Activated naive CD4-positive, alpha-beta T cell treated with anti-CD3 and anti-CD28 coated beads for 36 hours (primary cell): ENCODE measurements at regions of chr7 and their contacts with region 1.

Region 1: GRCh38 chr7:131231381-131232220 is 96.1 kb upstream of the MKLN1 start:
- DNase-seq: peak; percentile 80
- H3K4me3 Mint-ChIP-seq: peak overlapping the region; percentile 57
- H3K27ac Mint-ChIP-seq: peak overlapping the region; percentile 86
- H3K4me1 Mint-ChIP-seq: peaks cover 45% of the 10 kb centered on the region
- H3K27me3 Mint-ChIP-seq: no peaks in the 10 kb centered on the region

Region 2: GRCh38 chr7:130421684-130422083 is 809.9 kb before region 1 on chr7:
- CTCF ChIA-PET with region 1: no interaction called
- intact Hi-C with region 1: loop called (anchors 10 kb)
- DNase-seq: peak; percentile 65
- H3K4me3 Mint-ChIP-seq: peak overlapping the region; percentile 23
- H3K27ac Mint-ChIP-seq: peak overlapping the region; percentile 78
- H3K4me1 Mint-ChIP-seq: peaks cover 74% of the 10 kb centered on the region
- H3K27me3 Mint-ChIP-seq: no peaks in the 10 kb centered on the region

Region 3: GRCh38 chr7:130649004-130649790 is 582.4 kb before region 1 on chr7:
- CTCF ChIA-PET with region 1: no interaction called
- intact Hi-C with region 1: loop called (anchors 1 kb)
- DNase-seq: peak; percentile 53
- H3K4me3 Mint-ChIP-seq: no peak overlapping the region
- H3K27ac Mint-ChIP-seq: peak overlapping the region; percentile 79
- H3K4me1 Mint-ChIP-seq: peaks cover 29% of the 10 kb centered on the region
- H3K27me3 Mint-ChIP-seq: no peaks in the 10 kb centered on the region

Region 4: DNA sequence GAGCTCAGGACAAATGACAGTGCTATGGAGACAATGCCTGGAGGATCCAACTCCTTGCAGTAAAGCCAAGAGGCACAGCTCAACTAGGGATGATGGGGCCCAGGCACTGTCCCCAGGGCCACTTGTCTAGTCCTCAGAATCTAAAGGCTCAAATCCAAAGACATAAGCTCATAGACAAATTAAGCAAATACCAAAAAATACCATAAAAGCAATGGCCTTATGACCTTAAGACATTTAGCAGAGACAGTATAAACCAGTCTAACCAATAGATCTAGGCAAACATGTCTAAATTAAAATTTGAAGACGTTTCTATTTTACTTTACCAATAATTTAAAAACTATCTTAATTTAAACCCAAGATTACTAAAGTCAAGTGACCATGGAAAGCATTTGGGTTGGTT is 81.2 kb after region 1 on chr7:
- CTCF ChIA-PET with region 1: no interaction called
- intact Hi-C with region 1: no loop called
- DNase-seq: no peak
- H3K4me3 Mint-ChIP-seq: no peak overlapping the region
- H3K27ac Mint-ChIP-seq: no peak overlapping the region
- H3K4me1 Mint-ChIP-seq: no peaks in the 10 kb centered on the region
- H3K27me3 Mint-ChIP-seq: no peaks in the 10 kb centered on the region

Region 5: DNA sequence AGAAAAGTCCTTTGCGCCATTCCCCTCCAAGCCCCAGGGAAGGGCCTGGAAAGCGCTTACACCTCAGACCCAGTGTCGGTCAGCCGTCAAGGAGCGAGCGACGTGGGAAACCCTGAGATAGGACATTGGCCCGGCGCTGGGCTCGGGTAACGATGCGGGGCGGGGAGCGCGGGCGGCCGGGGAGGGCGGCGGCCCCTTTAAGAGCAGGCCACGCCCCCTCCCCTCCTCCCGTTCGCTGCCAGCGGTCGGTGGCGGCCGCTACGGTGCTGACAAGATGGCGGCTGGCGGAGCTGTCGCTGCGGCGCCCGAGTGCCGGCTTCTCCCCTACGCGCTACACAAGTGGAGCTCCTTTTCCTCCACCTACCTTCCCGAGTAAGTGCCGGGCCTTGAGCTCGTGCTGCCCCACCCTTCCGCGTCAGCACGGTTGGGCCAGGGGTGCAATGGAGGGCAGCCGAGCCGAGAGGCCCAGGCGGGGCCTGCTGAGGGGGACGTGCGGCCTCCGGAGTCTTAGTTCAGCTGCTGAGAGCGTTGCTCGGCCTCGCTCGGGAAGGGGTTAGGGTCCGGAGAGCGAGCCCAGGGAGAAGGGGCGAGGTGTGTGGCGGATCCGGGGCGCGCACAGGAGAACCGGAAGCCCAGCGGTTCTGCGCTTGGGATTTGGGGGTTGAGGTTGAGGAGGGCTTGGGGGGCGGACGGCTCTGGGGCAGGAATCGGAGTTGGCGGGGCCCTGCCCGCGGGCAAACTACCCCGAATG is 96.2 kb after region 1 on chr7 and contains the start of gene MKLN1:
- CTCF ChIA-PET with region 1: interaction called, 3 read pairs
- intact Hi-C with region 1: loop called (anchors 1 kb)
- DNase-seq: peak; percentile 90
- H3K4me3 Mint-ChIP-seq: peak within 1 kb of the TSS; percentile 98
- H3K27ac Mint-ChIP-seq: peak within 1 kb of the TSS; percentile 96
- H3K4me1 Mint-ChIP-seq: peaks cover 54% of the 10 kb centered on the region
- H3K27me3 Mint-ChIP-seq: no peaks in the 10 kb centered on the region
- total RNA-seq, gene MKLN1: 29.8 to 34.9 TPM

Region 6: DNA sequence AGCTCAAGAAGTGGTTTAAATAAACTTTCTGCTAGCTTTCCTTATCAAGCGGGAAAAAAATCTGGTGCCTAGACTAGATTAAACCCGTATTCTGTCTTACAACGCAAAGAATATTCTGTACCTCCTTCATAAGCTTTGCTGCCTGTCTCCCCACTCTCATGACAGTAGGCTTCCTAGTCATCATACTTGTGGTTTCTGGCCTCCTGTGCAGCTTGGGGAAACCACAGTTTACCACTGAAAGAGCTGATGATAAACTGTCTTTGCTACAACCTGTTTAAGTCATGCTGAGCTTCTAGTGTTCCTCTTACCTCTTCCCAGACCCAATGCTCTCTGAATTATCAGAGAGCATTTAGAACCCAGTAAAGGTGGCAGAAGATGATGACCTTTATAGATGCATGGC is 269.8 kb after region 1 on chr7:
- CTCF ChIA-PET with region 1: no interaction called
- intact Hi-C with region 1: loop called (anchors 2 kb)
- DNase-seq: peak; percentile 83
- H3K4me3 Mint-ChIP-seq: no peak overlapping the region
- H3K27ac Mint-ChIP-seq: peak overlapping the region; percentile 53
- H3K4me1 Mint-ChIP-seq: peaks cover 35% of the 10 kb centered on the region
- H3K27me3 Mint-ChIP-seq: no peaks in the 10 kb centered on the region